K562 (cell line): ENCODE measurements at regions of chr18 and their contacts with region 1.

Region 1: GRCh38 chr18:51110073-51110803 is 80.2 kb downstream of the SMAD4 start:
- DNase-seq: peak; percentile 58 to 76 (median 72)
- ATAC-seq: peak; percentile 99
- H3K4me3 ChIP-seq: no peak overlapping the region
- H3K27ac ChIP-seq: no peak overlapping the region
- H3K4me1 ChIP-seq: peaks cover 0 to 9% of the 10 kb centered on the region in 2 experiments; a peak in 2 of 5 replicates
- H3K27me3 ChIP-seq: no peaks in the 10 kb centered on the region
- CTCF ChIP-seq: peak; percentile 70 to 86 (median 73)
- EP300 ChIP-seq: no peak
- POLR2A ChIP-seq: no peak
- RAD21 ChIP-seq: peak; percentile 85 to 90

Region 2: DNA sequence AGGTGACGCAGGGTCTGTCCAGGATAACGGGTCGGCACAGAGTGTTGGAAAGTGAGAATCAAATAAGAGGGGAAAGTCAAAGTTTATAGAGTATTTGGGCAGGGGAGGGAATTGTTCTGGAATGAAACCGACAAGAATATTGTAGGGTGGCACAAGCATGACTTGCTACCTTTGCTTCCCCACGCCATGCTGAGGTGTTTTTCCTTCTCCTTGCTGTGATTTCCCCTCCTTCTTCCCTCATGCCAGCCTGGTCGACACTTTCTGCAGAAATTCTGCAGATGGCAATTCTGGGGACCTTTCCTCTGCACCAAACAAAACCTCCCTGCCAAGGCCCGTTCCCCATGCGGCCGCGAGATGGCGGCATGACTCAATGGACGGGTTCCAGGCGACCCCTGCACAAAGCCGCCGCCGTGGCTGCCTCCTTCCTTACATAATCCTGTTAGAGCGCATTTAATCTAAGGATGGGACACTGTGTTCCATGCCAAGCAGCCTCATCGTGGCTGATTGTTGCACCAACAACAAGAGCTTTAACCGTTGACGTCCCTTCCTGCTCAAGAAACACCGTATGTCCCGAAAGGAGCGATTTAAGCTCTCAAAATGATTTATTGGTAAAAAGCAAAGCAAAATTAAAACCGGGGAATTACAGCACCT is 290.4 kb before region 1 on chr18 and contains the start of gene MRO:
- CTCF ChIA-PET with region 1: no interaction called
- POLR2A ChIA-PET with region 1: no interaction called
- in situ Hi-C with region 1: no loop called
- intact Hi-C with region 1: no loop called
- DNase-seq: peak; percentile 66 to 82 (median 72)
- ATAC-seq: peak; percentile 98
- H3K4me3 ChIP-seq: 0 out of 2 replicates have a peak within 1 kb of the TSS, but pooled peaks have one; percentile 16
- H3K27ac ChIP-seq: no peak within 1 kb of the TSS; the same call in 2 of the 3 replicates
- H3K4me1 ChIP-seq: peaks cover 5 to 9% of the 10 kb centered on the region in 2 experiments; a peak in 3 of 5 replicates
- H3K27me3 ChIP-seq: peaks cover 0 to 8% of the 10 kb centered on the region in 2 experiments; a peak in 3 of 5 replicates
- CTCF ChIP-seq: peak; percentile 86 to 89 (median 88)
- EP300 ChIP-seq: no peak
- POLR2A ChIP-seq: no peak
- RAD21 ChIP-seq: peak; percentile 89 to 96
- polyA plus RNA-seq, gene MRO: 0.06 TPM in 1 of 2 experiments, not detected in the other

Region 3: DNA sequence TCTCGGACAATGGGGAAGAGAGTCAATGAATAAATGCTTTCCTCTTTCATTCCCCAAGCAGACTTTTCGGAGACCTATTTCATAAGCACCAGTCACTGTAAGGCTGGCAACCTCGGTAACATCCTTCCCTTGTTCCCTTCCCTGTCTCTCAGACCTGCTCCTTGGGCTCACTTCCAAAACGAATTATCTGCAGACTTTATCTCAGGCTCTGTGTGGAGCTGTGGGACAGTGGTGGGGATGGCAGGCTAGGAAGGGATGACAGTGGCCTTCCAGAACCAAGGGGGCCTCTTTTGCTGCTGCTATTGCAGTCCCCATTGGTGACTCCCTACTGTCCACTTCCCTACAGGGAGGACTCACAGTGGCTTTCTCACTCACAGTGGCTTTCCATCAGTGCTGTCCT is 272.9 kb after region 1 on chr18:
- CTCF ChIA-PET with region 1: no interaction called
- POLR2A ChIA-PET with region 1: no interaction called
- in situ Hi-C with region 1: no loop called
- intact Hi-C with region 1: loop called (anchors 10 kb)
- DNase-seq: no peak
- ATAC-seq: no peak
- H3K4me3 ChIP-seq: no peak overlapping the region
- H3K27ac ChIP-seq: no peak overlapping the region
- H3K4me1 ChIP-seq: no peaks in the 10 kb centered on the region
- H3K27me3 ChIP-seq: no peaks in the 10 kb centered on the region
- CTCF ChIP-seq: no peak
- EP300 ChIP-seq: no peak
- POLR2A ChIP-seq: no peak
- RAD21 ChIP-seq: no peak

Region 4: DNA sequence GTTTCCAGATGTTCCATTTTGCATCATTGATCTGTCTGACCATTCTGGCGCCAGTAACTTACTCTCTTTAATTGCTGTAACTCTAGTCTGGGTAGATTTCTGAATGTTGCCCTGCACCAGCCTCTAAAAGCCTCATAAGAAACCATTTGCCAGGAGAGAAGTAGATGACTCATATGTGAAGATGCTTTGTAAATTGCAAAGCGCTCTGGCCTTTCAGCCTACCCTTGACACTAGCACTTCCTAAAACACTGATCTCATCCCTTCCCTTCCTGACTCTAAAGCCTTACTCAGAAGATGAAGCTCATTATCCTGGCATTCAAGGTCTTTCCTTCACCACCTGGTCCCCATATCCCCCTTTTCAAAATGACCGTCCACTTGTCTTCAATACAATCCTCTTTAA is 280.5 kb after region 1 on chr18:
- CTCF ChIA-PET with region 1: no interaction called
- POLR2A ChIA-PET with region 1: no interaction called
- in situ Hi-C with region 1: loop called (anchors 10 kb)
- intact Hi-C with region 1: loop called (anchors 10 kb)
- DNase-seq: no peak
- ATAC-seq: no peak
- H3K4me3 ChIP-seq: no peak overlapping the region
- H3K27ac ChIP-seq: no peak overlapping the region
- H3K4me1 ChIP-seq: no peaks in the 10 kb centered on the region
- H3K27me3 ChIP-seq: no peaks in the 10 kb centered on the region
- CTCF ChIP-seq: no peak
- EP300 ChIP-seq: no peak
- POLR2A ChIP-seq: no peak
- RAD21 ChIP-seq: no peak

Region 5: DNA sequence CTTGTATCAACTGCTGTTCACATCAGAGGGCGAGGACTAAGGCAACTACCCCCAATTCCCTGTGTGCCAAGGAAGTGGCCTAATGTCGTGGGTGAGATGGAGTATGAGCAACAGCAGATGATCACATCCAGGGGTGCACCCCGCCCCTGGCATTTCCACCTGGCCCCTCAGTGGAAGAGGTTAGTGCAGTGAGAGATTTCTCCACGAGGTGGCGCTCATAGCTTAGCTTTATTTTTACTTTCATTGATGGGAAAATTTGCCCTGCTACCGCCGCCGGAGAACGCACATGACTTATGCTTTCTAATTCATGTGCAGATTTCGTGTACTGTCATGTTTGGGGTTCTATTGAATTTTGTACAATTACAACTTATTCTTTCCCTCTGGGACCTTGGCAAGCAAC is 557.9 kb after region 1 on chr18:
- CTCF ChIA-PET with region 1: no interaction called
- POLR2A ChIA-PET with region 1: no interaction called
- in situ Hi-C with region 1: loop called (anchors 25 kb)
- intact Hi-C with region 1: no loop called
- DNase-seq: peak; percentile 20 to 49 (median 45)
- ATAC-seq: peak; percentile 67
- H3K4me3 ChIP-seq: no peak overlapping the region
- H3K27ac ChIP-seq: no peak overlapping the region
- H3K4me1 ChIP-seq: no peaks in the 10 kb centered on the region
- H3K27me3 ChIP-seq: no peaks in the 10 kb centered on the region
- CTCF ChIP-seq: peak; percentile 31 to 69 (median 54); a peak in 5 of 6 replicates
- EP300 ChIP-seq: no peak
- POLR2A ChIP-seq: no peak
- RAD21 ChIP-seq: peak; percentile 61 to 72

Region 6: DNA sequence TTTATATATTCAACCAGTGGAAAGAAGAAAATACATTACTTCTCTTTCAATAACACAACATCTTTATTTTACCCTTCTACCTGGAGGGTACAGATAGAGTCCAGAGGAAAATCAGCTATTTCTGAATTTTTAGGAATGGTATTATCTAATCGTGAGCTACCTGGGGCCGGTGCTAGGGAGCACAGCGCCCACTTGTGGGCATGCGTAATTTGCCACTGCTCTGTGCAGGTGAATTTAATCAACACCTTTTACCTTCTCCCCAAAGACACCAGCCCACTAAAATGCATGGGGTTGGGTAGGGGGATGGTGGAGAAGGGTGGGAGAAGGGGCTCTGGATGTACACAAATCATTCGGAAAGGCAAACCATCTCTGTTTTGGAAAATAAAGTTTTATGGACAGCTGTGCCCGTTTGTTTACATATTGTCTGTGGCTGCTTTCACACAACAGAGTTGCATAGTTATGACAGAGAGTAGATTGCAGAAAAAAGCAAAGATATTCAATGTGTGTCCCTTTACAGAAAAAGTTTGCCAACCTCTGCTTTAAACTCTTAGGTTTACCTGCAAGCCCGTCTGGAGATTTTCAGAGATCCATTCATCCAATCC is 1178.3 kb after region 1 on chr18:
- CTCF ChIA-PET with region 1: no interaction called
- POLR2A ChIA-PET with region 1: no interaction called
- in situ Hi-C with region 1: loop called (anchors 25 kb)
- intact Hi-C with region 1: no loop called
- DNase-seq: peak; percentile 2 to 10 (median 5)
- ATAC-seq: no peak
- H3K4me3 ChIP-seq: no peak overlapping the region
- H3K27ac ChIP-seq: no peak overlapping the region
- H3K4me1 ChIP-seq: no peaks in the 10 kb centered on the region
- H3K27me3 ChIP-seq: no peaks in the 10 kb centered on the region
- CTCF ChIP-seq: peak; percentile 4 to 39 (median 24); a peak in 2 of 6 replicates
- EP300 ChIP-seq: no peak
- POLR2A ChIP-seq: no peak
- RAD21 ChIP-seq: peak in 1 of 2 experiments; percentile 42; a peak in 2 of 4 replicates